Activated CD8-positive, alpha-beta T cell treated with anti-CD3 and anti-CD28 coated beads for 36 hours (primary cell): ENCODE measurements at regions of chr12 and their contacts with region 1.

Region 1: DNA sequence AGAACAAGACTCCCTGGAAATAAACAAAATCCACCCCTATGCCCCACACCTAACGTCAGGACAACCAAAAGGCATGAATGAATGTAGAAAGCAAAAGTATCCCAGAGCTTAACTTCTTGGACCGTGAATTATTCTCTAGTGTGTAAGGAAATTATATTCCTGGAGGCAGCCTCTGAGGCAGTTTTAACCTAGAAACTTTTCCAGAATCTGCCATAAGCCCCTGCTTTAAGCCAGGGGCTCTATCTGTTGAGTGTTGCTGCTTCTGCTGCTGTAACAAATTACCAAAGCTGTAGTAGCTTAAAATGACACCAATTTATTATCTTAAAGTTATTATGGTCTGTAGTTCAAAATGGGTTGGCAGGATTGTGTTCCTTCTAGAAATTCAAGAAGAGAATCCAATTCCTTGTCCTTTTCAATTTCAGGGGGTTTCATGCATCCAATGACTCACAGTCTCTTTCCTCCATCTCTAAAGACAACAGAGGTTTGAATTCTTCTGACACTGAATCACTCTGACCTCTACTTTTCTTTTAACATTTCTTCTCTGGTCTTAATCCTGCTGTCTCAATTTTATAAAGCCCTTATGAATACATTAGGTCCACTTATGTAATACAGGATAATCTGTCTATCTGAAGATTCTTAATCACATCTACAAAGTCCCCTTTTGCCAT is 242.7 kb downstream of the ATXN7L3B start:
- DNase-seq: no peak
- ATAC-seq: no peak
- H3K4me3 Mint-ChIP-seq: no peak overlapping the region
- H3K27ac Mint-ChIP-seq: no peak overlapping the region
- H3K4me1 Mint-ChIP-seq: no peaks in the 10 kb centered on the region
- H3K27me3 Mint-ChIP-seq: no peaks in the 10 kb centered on the region
- CTCF ChIP-seq: no peak

Region 2: GRCh38 chr12:74732826-74733225 is 47.5 kb before region 1 on chr12:
- CTCF ChIA-PET with region 1: no interaction called
- POLR2A ChIA-PET with region 1: no interaction called
- intact Hi-C with region 1: no loop called
- DNase-seq: no peak
- ATAC-seq: no peak
- H3K4me3 Mint-ChIP-seq: no peak overlapping the region
- H3K27ac Mint-ChIP-seq: no peak overlapping the region
- H3K4me1 Mint-ChIP-seq: no peaks in the 10 kb centered on the region
- H3K27me3 Mint-ChIP-seq: no peaks in the 10 kb centered on the region
- CTCF ChIP-seq: no peak

Region 3: GRCh38 chr12:74836567-74836966 is 56.3 kb after region 1 on chr12:
- CTCF ChIA-PET with region 1: no interaction called
- POLR2A ChIA-PET with region 1: no interaction called
- intact Hi-C with region 1: loop called (anchors 2 kb)
- DNase-seq: no peak
- ATAC-seq: no peak
- H3K4me3 Mint-ChIP-seq: no peak overlapping the region
- H3K27ac Mint-ChIP-seq: no peak overlapping the region
- H3K4me1 Mint-ChIP-seq: no peaks in the 10 kb centered on the region
- H3K27me3 Mint-ChIP-seq: no peaks in the 10 kb centered on the region
- CTCF ChIP-seq: no peak

Region 4: GRCh38 chr12:74890237-74890599 is 109.9 kb after region 1 on chr12:
- CTCF ChIA-PET with region 1: no interaction called
- POLR2A ChIA-PET with region 1: no interaction called
- intact Hi-C with region 1: no loop called
- DNase-seq: peak; percentile 28
- ATAC-seq: peak; percentile 94
- H3K4me3 Mint-ChIP-seq: no peak overlapping the region
- H3K27ac Mint-ChIP-seq: no peak overlapping the region
- H3K4me1 Mint-ChIP-seq: peaks cover 19% of the 10 kb centered on the region
- H3K27me3 Mint-ChIP-seq: no peaks in the 10 kb centered on the region
- CTCF ChIP-seq: no peak

Region 5: GRCh38 chr12:75000120-75000519 is 219.8 kb after region 1 on chr12:
- CTCF ChIA-PET with region 1: no interaction called
- POLR2A ChIA-PET with region 1: no interaction called
- intact Hi-C with region 1: no loop called
- DNase-seq: no peak
- ATAC-seq: no peak
- H3K4me3 Mint-ChIP-seq: no peak overlapping the region
- H3K27ac Mint-ChIP-seq: no peak overlapping the region
- H3K4me1 Mint-ChIP-seq: peaks cover 6% of the 10 kb centered on the region
- H3K27me3 Mint-ChIP-seq: no peaks in the 10 kb centered on the region
- CTCF ChIP-seq: no peak